CD8-positive, alpha-beta T cell (primary cell): ENCODE measurements at regions of chr11 and their contacts with region 1.

Region 1: GRCh38 chr11:22730319-22730718 is 63.9 kb downstream of the GAS2 start:
- DNase-seq: peak in 2 of 9 experiments; percentile 40 to 54
- ATAC-seq: no peak
- H3K4me3 ChIP-seq: no peak overlapping the region
- H3K4me3 Mint-ChIP-seq: no peak overlapping the region
- H3K27ac ChIP-seq: no peak overlapping the region
- H3K27ac Mint-ChIP-seq: no peak overlapping the region
- H3K4me1 ChIP-seq: no peaks in the 10 kb centered on the region
- H3K4me1 Mint-ChIP-seq: no peaks in the 10 kb centered on the region
- H3K27me3 ChIP-seq: no peaks in the 10 kb centered on the region
- H3K27me3 Mint-ChIP-seq: no peaks in the 10 kb centered on the region
- CTCF ChIP-seq: no peak

Region 2: DNA sequence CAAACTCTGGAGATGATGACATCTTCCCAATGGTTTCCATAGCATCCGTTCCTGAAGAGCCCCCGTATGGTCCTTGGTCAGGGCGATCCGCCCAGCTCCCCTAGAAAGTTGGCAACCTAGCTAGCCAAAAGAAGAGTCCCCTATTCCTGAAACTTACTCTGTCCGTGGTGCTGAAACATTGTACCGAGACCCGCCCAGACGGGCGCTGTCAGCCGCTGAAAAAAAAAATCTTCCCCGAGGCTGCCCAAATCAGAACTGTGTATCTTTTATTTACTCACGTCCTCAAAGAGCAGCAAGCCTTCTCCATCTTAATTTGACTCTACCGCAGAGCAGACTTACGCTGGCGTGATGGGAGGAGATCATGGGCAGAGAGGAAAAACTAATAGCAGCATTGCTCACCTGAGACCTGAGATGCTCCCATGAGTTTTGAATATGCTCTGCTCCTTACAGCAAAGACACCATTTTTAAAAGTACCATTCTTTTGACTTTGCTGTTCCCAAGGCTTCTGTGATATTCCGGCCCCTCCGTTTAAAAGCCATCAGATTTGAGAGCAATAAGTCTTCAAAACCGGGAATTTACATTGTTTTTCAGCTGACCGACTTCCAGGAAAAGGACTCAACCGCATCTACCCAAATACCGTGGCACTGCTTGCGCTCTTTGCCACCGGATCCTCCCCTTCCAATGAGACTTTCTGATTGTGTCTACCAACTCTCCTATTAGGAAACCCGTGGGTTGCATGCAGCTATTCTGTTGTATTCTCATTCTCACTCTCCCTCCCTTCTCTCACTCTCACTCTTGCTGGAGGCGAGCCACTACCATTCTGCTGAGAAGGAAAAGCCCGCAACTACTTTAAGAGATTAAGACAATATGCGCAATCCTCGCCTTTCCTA is 392.5 kb before region 1 on chr11 and contains the start of gene SLC17A6:
- CTCF ChIA-PET with region 1: no interaction called
- POLR2A ChIA-PET with region 1: no interaction called
- intact Hi-C with region 1: loop called (anchors 1 to 2 kb)
- DNase-seq: peak in 2 of 9 experiments; percentile 12 to 18
- ATAC-seq: no peak
- H3K4me3 ChIP-seq: no peak within 1 kb of the TSS
- H3K4me3 Mint-ChIP-seq: no peak within 1 kb of the TSS
- H3K27ac ChIP-seq: no peak within 1 kb of the TSS
- H3K27ac Mint-ChIP-seq: no peak within 1 kb of the TSS
- H3K4me1 ChIP-seq: no peaks in the 10 kb centered on the region
- H3K4me1 Mint-ChIP-seq: peaks cover 15% of the 10 kb centered on the region
- H3K27me3 ChIP-seq: peaks cover 16 to 32% of the 10 kb centered on the region in 2 experiments
- H3K27me3 Mint-ChIP-seq: peaks cover 66% of the 10 kb centered on the region
- CTCF ChIP-seq: no peak
- total RNA-seq, gene SLC17A6: not detected

Region 3: GRCh38 chr11:22666688-22667439 is 63.5 kb before region 1 on chr11:
- CTCF ChIA-PET with region 1: interaction called, 4 read pairs
- POLR2A ChIA-PET with region 1: no interaction called
- intact Hi-C with region 1: loop called (anchors 1 to 2 kb)
- DNase-seq: peak in 5 of 9 experiments; percentile 16 to 50 (median 22)
- ATAC-seq: peak; percentile 42
- H3K4me3 ChIP-seq: peak overlapping the region; percentile 3 to 14
- H3K4me3 Mint-ChIP-seq: peak overlapping the region; percentile 53
- H3K27ac ChIP-seq: no peak overlapping the region
- H3K27ac Mint-ChIP-seq: no peak overlapping the region
- H3K4me1 ChIP-seq: peaks cover 4% of the 10 kb centered on the region
- H3K4me1 Mint-ChIP-seq: peaks cover 12% of the 10 kb centered on the region
- H3K27me3 ChIP-seq: peaks cover 6 to 18% of the 10 kb centered on the region in 2 experiments
- H3K27me3 Mint-ChIP-seq: peaks cover 53% of the 10 kb centered on the region
- CTCF ChIP-seq: no peak

Region 4: DNA sequence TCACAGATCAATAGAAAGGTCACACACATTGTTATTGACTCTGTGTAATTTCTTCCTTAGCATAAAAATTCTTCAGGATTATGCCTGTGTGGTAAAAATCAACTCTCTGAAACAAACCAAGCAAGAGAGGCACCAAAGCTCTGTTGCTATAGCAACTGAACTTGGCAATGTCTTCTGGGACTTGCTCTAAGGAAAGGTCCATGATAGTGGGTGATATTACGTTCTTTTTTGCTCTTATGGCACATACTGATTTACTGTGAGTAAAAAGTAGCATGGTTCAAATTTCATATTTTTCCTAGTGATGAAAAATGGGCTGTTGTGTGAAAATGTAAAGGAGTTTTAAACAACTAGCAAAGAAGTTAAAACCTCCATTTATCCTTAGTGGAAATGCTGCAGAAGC is 32.8 kb after region 1 on chr11:
- CTCF ChIA-PET with region 1: no interaction called
- POLR2A ChIA-PET with region 1: no interaction called
- intact Hi-C with region 1: no loop called
- DNase-seq: no peak
- ATAC-seq: no peak
- H3K4me3 ChIP-seq: no peak overlapping the region
- H3K4me3 Mint-ChIP-seq: no peak overlapping the region
- H3K27ac ChIP-seq: no peak overlapping the region
- H3K27ac Mint-ChIP-seq: no peak overlapping the region
- H3K4me1 ChIP-seq: no peaks in the 10 kb centered on the region
- H3K4me1 Mint-ChIP-seq: no peaks in the 10 kb centered on the region
- H3K27me3 ChIP-seq: no peaks in the 10 kb centered on the region
- H3K27me3 Mint-ChIP-seq: no peaks in the 10 kb centered on the region
- CTCF ChIP-seq: no peak

Region 5: GRCh38 chr11:22930816-22931594 is 200.7 kb after region 1 on chr11:
- CTCF ChIA-PET with region 1: no interaction called
- POLR2A ChIA-PET with region 1: no interaction called
- intact Hi-C with region 1: no loop called
- DNase-seq: no peak
- ATAC-seq: no peak
- H3K4me3 ChIP-seq: no peak overlapping the region
- H3K4me3 Mint-ChIP-seq: no peak overlapping the region
- H3K27ac ChIP-seq: no peak overlapping the region
- H3K27ac Mint-ChIP-seq: no peak overlapping the region
- H3K4me1 ChIP-seq: no peaks in the 10 kb centered on the region
- H3K4me1 Mint-ChIP-seq: no peaks in the 10 kb centered on the region
- H3K27me3 ChIP-seq: no peaks in the 10 kb centered on the region
- H3K27me3 Mint-ChIP-seq: no peaks in the 10 kb centered on the region
- CTCF ChIP-seq: no peak